Mammary epithelial cell (primary cell): ENCODE measurements at regions of chr1 and their contacts with region 1.

Region 1: DNA sequence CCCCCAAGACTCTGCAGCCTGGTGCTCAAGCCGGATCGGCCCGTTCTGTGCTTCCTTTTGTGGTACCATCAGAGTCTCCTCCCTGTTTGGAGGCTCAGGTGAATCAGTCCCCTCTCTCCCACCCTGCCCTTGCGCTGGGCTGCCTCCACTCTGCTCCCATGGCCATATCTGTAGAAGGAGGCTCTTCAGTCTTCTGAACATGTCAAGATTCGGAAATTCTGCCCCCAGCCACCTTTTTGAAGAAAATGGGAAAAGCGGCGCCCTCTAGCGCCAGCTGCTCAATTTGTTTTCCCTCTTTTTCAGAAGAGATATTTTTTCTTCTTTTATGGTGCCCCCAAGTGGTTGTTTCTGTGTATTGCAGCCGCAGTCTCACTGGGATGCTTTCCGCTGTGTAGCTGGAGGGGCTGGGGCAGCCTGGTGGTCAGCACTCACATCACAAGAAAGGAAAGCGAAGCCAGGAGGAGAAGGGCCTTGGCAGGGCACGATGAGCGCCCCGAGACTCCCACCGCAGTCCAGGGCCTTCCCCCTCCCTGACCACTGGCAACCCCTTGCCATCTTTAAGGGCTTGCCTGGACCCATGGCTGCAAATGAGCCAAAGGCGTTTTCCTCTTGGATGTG is 58.4 kb upstream of the CACNA1E start:
- DNase-seq: peak; percentile 42
- H3K4me3 ChIP-seq: no peak overlapping the region
- H3K27ac ChIP-seq: no peak overlapping the region
- H3K4me1 ChIP-seq: no peaks in the 10 kb centered on the region
- H3K27me3 ChIP-seq: no peaks in the 10 kb centered on the region
- CTCF ChIP-seq: peak; percentile 97 to 99

Region 2: GRCh38 chr1:181062836-181063428 is 362.0 kb before region 1 on chr1:
- CTCF ChIA-PET with region 1: no interaction called
- dilution Hi-C with region 1: no loop called
- in situ Hi-C with region 1: loop called in 1 of 2 experiments (anchors 25 kb)
- intact Hi-C with region 1: no loop called
- DNase-seq: no peak
- H3K4me3 ChIP-seq: no peak overlapping the region
- H3K27ac ChIP-seq: no peak overlapping the region
- H3K4me1 ChIP-seq: no peaks in the 10 kb centered on the region
- H3K27me3 ChIP-seq: no peaks in the 10 kb centered on the region
- CTCF ChIP-seq: no peak

Region 3: GRCh38 chr1:181206513-181206912 is 218.4 kb before region 1 on chr1:
- CTCF ChIA-PET with region 1: no interaction called
- dilution Hi-C with region 1: loop called (anchors 25 kb)
- in situ Hi-C with region 1: no loop called
- intact Hi-C with region 1: no loop called
- DNase-seq: no peak
- H3K4me3 ChIP-seq: no peak overlapping the region
- H3K27ac ChIP-seq: no peak overlapping the region
- H3K4me1 ChIP-seq: no peaks in the 10 kb centered on the region
- H3K27me3 ChIP-seq: no peaks in the 10 kb centered on the region
- CTCF ChIP-seq: no peak

Region 4: GRCh38 chr1:181232532-181232931 is 192.4 kb before region 1 on chr1:
- CTCF ChIA-PET with region 1: no interaction called
- dilution Hi-C with region 1: no loop called
- in situ Hi-C with region 1: no loop called
- intact Hi-C with region 1: loop called (anchors 1 kb)
- DNase-seq: no peak
- H3K4me3 ChIP-seq: no peak overlapping the region
- H3K27ac ChIP-seq: no peak overlapping the region
- H3K4me1 ChIP-seq: peaks cover 5% of the 10 kb centered on the region
- H3K27me3 ChIP-seq: no peaks in the 10 kb centered on the region
- CTCF ChIP-seq: peak in 1 of 2 donors; percentile 17